Vagina (tissue), 2 donors: ENCODE measurements at regions of chr1 and their contacts with region 1.

Region 1: GRCh38 chr1:235971571-235972310 is 93.1 kb downstream of the NID1 start:
- DNase-seq: peak in 1 of 2 donors; percentile 98
- H3K4me3 ChIP-seq: peak overlapping the region; percentile 34 to 46
- H3K27ac ChIP-seq: peak overlapping the region; percentile 92
- H3K4me1 ChIP-seq: peaks cover 9% of the 10 kb centered on the region
- H3K27me3 ChIP-seq: no peaks in the 10 kb centered on the region
- CTCF ChIP-seq: peak; percentile 68 to 94 (median 76)
- POLR2A ChIP-seq: peak in 1 of 2 donors; percentile 73

Region 2: DNA sequence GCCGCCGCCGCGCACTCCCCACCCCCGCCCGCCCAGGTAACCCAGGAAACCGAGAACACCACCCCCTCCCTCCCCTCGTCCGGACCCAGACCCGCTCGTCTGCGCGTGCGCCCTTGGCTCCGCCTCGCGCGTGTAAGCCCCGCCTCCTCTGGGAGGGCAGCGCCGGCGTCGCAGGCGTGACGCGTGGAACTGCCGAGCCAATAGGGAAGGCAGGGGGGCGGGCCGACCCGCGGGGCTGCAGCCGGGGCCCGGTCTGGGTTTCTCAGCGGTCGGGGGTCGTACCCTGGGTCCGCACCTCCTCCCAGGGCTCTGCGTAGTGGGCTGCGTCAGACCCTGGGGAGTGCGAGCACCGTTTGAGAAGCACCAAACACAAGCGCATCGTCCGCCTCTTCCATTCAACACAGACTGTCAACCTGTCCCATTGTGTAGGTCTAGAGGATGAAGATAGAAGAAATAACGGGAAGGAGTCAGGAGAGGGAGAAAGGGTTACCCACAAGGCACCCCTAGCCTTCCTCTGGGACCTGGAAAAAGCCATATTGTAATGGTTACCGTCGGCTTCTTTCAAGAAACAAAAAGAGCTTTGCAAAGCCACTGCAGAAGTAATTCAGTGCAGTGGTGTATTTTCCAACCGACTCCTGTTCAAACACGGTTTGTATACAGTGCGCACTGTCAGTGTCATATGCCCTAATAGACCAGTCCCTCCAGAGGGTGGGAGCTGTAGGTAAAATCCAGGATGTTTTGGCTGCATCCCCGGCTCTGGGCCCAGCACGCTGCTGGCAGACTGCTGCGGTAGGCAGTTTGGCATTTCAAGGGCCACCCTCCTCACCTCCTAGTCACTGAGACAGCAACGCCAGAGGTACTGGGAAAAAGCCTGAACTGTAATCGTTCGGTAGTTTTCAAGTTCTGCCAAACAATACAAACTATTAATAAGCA is 104.6 kb before region 1 on chr1:
- intact Hi-C with region 1: loop called (anchors 10 kb)
- DNase-seq: peak in 1 of 2 donors; percentile 98
- H3K4me3 ChIP-seq: peak overlapping the region; percentile 87 to 98
- H3K27ac ChIP-seq: peak overlapping the region; percentile 99
- H3K4me1 ChIP-seq: peaks cover 42% of the 10 kb centered on the region
- H3K27me3 ChIP-seq: no peaks in the 10 kb centered on the region
- CTCF ChIP-seq: no peak
- POLR2A ChIP-seq: peak in 1 of 2 donors; percentile 69

Region 3: GRCh38 chr1:235917267-235917811 is 54.4 kb before region 1 on chr1:
- intact Hi-C with region 1: no loop called
- DNase-seq: peak in 1 of 2 donors; percentile 99
- H3K4me3 ChIP-seq: no peak overlapping the region
- H3K27ac ChIP-seq: peak overlapping the region; percentile 96
- H3K4me1 ChIP-seq: peaks cover 50% of the 10 kb centered on the region
- H3K27me3 ChIP-seq: no peaks in the 10 kb centered on the region
- CTCF ChIP-seq: no peak
- POLR2A ChIP-seq: no peak

Region 4: DNA sequence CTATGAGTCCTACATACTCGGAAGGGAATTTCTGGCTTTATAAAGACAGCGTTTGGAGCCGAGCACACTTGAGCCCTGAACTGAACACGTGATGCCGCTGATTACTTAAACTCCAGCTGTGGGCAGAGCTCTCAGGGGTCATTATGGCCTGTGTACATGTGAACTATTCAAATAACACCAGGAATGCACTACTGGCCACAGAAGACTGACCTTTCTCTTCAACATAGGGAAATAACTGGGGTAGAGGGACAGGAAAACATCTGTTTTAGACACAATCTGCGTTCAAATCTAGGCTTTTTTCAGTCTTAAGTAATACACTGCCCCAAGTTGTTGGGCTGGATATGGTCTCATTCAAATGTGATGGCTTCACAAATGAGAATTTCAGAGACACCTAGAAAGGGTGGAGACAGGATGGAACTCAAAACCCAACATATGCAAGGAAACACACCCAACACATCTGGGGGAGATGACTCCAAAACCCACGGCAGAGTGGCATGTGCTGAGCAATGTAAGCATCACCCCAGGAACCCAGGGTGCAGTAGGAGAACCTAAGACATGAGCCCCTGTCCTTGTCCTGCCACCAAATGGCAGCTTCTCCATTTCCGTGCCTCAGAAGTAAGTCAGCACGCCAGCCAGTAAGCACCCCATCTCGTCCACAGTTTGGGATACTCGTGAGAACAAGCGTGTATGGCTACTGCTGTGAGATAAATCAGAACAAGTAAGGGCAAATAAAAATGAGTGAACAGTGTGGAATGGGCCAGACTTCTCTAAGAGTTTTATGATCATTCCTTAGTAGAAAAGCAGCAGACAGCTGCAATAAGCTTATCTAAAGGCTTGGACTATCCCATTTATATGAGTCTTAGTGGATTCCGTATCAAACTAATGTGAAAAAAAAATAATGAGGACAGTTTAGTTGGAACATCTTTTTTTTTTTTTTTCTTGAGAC is 68.3 kb after region 1 on chr1:
- intact Hi-C with region 1: loop called (anchors 10 kb)
- DNase-seq: no peak
- H3K4me3 ChIP-seq: peak overlapping the region in 1 of 2 donors; percentile 11
- H3K27ac ChIP-seq: peak overlapping the region; percentile 42
- H3K4me1 ChIP-seq: peaks cover 5% of the 10 kb centered on the region
- H3K27me3 ChIP-seq: no peaks in the 10 kb centered on the region
- CTCF ChIP-seq: no peak
- POLR2A ChIP-seq: no peak

Region 5: GRCh38 chr1:236185692-236186091 is 214.0 kb after region 1 on chr1:
- intact Hi-C with region 1: no loop called
- DNase-seq: no peak
- H3K4me3 ChIP-seq: no peak overlapping the region
- H3K27ac ChIP-seq: no peak overlapping the region
- H3K4me1 ChIP-seq: no peaks in the 10 kb centered on the region
- H3K27me3 ChIP-seq: no peaks in the 10 kb centered on the region
- CTCF ChIP-seq: no peak
- POLR2A ChIP-seq: no peak